K562 (cell line): ENCODE measurements at regions of chr7 and their contacts with region 1.

Region 1: GRCh38 chr7:111486472-111487142 is 75.7 kb downstream of the IMMP2L start:
- DNase-seq: peak; percentile 40 to 87 (median 60)
- ATAC-seq: peak; percentile 90
- H3K4me3 ChIP-seq: no peak overlapping the region
- H3K27ac ChIP-seq: no peak overlapping the region; the same call in 2 of the 3 replicates
- H3K4me1 ChIP-seq: no peaks in the 10 kb centered on the region
- H3K27me3 ChIP-seq: no peaks in the 10 kb centered on the region
- CTCF ChIP-seq: peak; percentile 73 to 96 (median 81)
- EP300 ChIP-seq: peak; percentile 44; the same call in 1 of the 2 replicates
- POLR2A ChIP-seq: no peak
- RAD21 ChIP-seq: peak; percentile 97 to 98

Region 2: DNA sequence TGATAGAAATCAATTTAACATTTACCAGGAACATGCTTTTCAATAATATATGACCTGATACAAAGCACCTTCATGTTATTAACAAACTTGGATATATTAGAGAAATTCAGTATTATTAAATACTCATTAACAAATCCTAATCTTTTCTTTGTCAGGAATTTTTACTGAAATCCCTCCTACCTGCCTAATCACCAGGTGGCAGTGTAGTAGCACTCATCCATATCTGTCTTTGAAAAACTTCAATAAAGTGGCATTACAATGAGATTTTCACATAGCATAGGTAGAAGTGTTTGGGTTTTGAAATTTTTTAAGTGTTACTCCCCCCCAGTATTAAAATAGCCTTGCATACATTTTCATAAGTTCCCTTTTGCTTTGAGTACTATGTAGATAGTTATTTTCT is 1642.2 kb before region 1 on chr7:
- CTCF ChIA-PET with region 1: no interaction called
- POLR2A ChIA-PET with region 1: no interaction called
- in situ Hi-C with region 1: no loop called
- intact Hi-C with region 1: loop called (anchors 5 kb)
- DNase-seq: no peak
- ATAC-seq: no peak
- H3K4me3 ChIP-seq: no peak overlapping the region
- H3K27ac ChIP-seq: no peak overlapping the region
- H3K4me1 ChIP-seq: no peaks in the 10 kb centered on the region
- H3K27me3 ChIP-seq: no peaks in the 10 kb centered on the region
- CTCF ChIP-seq: 0 out of 6 replicates have a peak, but pooled peaks of 1 of the 3 experiments have one; percentile 9
- EP300 ChIP-seq: no peak
- POLR2A ChIP-seq: no peak
- RAD21 ChIP-seq: peak in 1 of 2 experiments; percentile 35; a peak in 2 of 4 replicates

Region 3: DNA sequence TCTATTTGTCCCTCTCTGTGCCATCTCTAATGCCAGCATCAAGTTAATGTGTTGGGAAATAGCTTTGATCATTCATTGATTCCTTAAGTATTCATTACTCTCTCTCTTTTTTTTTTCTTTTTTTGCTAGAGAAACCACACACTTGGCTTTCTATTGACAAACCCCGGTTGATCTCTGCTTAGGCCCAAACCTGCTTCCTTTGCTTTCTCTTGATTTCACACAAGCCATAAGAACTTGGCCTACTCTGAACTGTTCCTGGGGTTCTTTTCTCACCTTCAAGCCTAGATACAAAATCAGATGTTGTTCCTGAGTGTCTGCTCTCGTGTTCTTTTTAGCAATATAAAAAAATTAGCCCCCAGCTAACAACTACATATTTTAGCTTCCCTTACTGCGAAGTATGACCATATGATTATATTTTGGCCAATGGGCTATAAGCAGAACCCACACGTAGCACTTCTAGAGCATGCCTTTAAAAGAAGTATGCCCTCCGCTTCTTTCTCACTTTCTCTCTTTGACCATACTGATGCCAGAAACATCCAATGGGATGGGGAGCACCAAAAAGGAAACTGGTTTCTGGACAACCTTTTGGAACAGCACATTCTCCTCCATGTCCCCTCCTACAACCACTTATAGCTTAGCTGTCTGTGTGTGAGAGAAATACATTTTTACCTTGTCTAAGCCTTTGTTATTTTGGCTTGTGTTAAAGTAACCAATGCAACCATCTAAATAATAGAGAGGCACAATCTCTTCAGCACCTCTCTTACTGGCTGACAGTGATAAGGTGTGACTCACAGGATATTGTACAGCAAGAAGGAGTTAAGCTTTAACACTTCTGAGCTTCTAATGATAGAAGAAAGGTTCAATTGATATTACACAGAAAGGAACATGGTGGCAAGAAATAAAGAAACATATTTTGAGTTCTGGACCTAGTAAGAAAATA is 492.3 kb before region 1 on chr7:
- CTCF ChIA-PET with region 1: no interaction called
- POLR2A ChIA-PET with region 1: no interaction called
- in situ Hi-C with region 1: no loop called
- intact Hi-C with region 1: loop called (anchors 10 kb)
- DNase-seq: peak; percentile 14 to 65 (median 52)
- ATAC-seq: peak; percentile 94
- H3K4me3 ChIP-seq: no peak overlapping the region
- H3K27ac ChIP-seq: peak overlapping the region; percentile 23; the same call in 2 of the 3 replicates
- H3K4me1 ChIP-seq: peaks cover 0 to 13% of the 10 kb centered on the region in 2 experiments; a peak in 2 of 5 replicates
- H3K27me3 ChIP-seq: no peaks in the 10 kb centered on the region
- CTCF ChIP-seq: no peak
- EP300 ChIP-seq: peak; percentile 87; the same call in 1 of the 2 replicates
- POLR2A ChIP-seq: no peak
- RAD21 ChIP-seq: no peak

Region 4: GRCh38 chr7:111029574-111030251 is 456.9 kb before region 1 on chr7:
- CTCF ChIA-PET with region 1: no interaction called
- POLR2A ChIA-PET with region 1: no interaction called
- in situ Hi-C with region 1: no loop called
- intact Hi-C with region 1: no loop called
- DNase-seq: peak in 1 of 4 experiments; percentile 7
- ATAC-seq: no peak
- H3K4me3 ChIP-seq: no peak overlapping the region
- H3K27ac ChIP-seq: no peak overlapping the region
- H3K4me1 ChIP-seq: no peaks in the 10 kb centered on the region
- H3K27me3 ChIP-seq: no peaks in the 10 kb centered on the region
- CTCF ChIP-seq: no peak
- EP300 ChIP-seq: no peak
- POLR2A ChIP-seq: no peak
- RAD21 ChIP-seq: no peak

Region 5: DNA sequence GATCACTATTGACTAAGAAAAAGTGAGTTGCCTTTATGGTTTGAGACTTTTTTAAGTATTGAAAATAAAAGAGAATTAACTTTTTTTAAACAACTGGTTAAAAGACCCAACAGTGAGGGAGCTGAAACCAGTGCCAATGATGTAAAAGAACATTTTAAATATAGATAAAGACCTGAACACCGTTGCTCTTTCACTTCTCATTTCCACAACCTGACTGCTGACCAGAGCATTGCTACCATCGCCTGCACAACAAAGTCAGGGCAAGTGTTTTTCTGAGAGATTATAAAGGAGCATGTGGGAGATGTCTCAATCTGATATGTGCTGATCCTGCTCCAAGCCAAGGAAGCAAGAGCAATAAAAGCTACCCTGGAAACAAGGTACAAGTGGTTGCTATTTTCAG is 40.9 kb after region 1 on chr7:
- CTCF ChIA-PET with region 1: no interaction called
- POLR2A ChIA-PET with region 1: no interaction called
- in situ Hi-C with region 1: no loop called
- intact Hi-C with region 1: no loop called
- DNase-seq: peak in 2 of 4 experiments; percentile 35 to 59
- ATAC-seq: peak; percentile 78
- H3K4me3 ChIP-seq: no peak overlapping the region
- H3K27ac ChIP-seq: no peak overlapping the region
- H3K4me1 ChIP-seq: peaks cover 0 to 28% of the 10 kb centered on the region in 2 experiments; a peak in 3 of 5 replicates
- H3K27me3 ChIP-seq: no peaks in the 10 kb centered on the region
- CTCF ChIP-seq: no peak
- EP300 ChIP-seq: no peak
- POLR2A ChIP-seq: no peak
- RAD21 ChIP-seq: 0 out of 4 replicates have a peak, but pooled peaks of 1 of the 2 experiments have one; percentile 6